ENCODE measurements at regions of chr9 and their contacts with region 1.

Region 1: GRCh38 chr9:114745108-114745848 is 60.6 kb downstream of the TNFSF15 start:
- DNase-seq: no peak
- CTCF ChIP-seq: no peak

Region 2: DNA sequence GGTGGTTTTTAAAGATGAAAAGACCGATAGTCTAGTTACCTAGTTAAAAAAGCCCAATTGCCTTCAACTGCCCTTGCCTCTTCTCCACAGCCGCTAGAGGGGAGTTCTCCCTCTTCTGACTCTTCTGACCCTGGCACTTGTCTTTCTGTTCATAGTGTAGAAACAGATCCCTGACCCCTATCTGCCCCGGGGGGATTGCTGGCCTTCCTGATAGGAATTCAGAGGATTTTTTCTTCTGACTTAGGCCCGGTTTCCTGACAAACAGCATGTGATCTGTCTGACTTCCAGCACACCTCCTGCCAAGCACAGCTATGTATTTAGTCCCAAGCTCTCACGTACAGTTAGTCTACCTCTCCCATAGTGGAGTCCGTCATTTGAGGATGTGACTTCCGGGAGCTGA is 139.2 kb before region 1 on chr9:
- in situ Hi-C with region 1: no loop called
- DNase-seq: no peak
- CTCF ChIP-seq: no peak

Region 3: GRCh38 chr9:114906908-114907571 is 161.8 kb after region 1 on chr9:
- in situ Hi-C with region 1: loop called (anchors 10 kb)
- DNase-seq: peak; percentile 29
- CTCF ChIP-seq: peak; percentile 61

Measured in GM13977 (cell line).